ENCODE measurements at regions of chr1 and their contacts with region 1.

Region 1: DNA sequence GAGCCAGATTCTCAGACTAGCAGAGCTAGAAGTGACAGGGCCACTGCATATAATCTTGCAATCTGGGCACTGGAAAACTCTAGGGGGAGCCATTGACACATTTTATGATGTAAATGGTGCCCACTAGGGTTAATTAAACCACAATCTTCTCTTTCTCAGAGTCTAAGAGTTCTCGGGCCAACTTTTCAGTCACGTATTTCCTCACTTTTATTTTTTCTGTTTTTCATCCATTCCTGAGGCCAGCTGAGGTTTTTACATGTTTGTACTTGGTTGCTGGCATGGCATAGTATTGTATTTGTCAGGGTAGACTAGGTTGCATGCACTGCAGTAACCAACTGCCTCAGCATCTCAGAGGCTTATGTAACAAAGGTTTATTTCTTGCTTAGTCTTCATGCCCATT is 138.2 kb downstream of the ZNF326 start:
- DNase-seq: peak in 1 of 2 experiments; percentile 36
- H3K4me3 ChIP-seq: no peak overlapping the region
- H3K4me3 Mint-ChIP-seq: no peak overlapping the region
- H3K27ac Mint-ChIP-seq: no peak overlapping the region
- H3K4me1 ChIP-seq: no peaks in the 10 kb centered on the region
- H3K4me1 Mint-ChIP-seq: no peaks in the 10 kb centered on the region
- H3K27me3 ChIP-seq: no peaks in the 10 kb centered on the region
- H3K27me3 Mint-ChIP-seq: peaks cover 2% of the 10 kb centered on the region
- CTCF ChIP-seq: peak; percentile 30 to 35

Region 2: GRCh38 chr1:90291431-90292216 is 158.5 kb after region 1 on chr1:
- CTCF ChIA-PET with region 1: no interaction called
- POLR2A ChIA-PET with region 1: no interaction called
- intact Hi-C with region 1: loop called (anchors 1 kb)
- DNase-seq: no peak
- H3K4me3 ChIP-seq: no peak overlapping the region
- H3K4me3 Mint-ChIP-seq: no peak overlapping the region
- H3K27ac Mint-ChIP-seq: no peak overlapping the region
- H3K4me1 ChIP-seq: no peaks in the 10 kb centered on the region
- H3K4me1 Mint-ChIP-seq: no peaks in the 10 kb centered on the region
- H3K27me3 ChIP-seq: no peaks in the 10 kb centered on the region
- H3K27me3 Mint-ChIP-seq: peaks cover 13% of the 10 kb centered on the region
- CTCF ChIP-seq: no peak

Region 3: DNA sequence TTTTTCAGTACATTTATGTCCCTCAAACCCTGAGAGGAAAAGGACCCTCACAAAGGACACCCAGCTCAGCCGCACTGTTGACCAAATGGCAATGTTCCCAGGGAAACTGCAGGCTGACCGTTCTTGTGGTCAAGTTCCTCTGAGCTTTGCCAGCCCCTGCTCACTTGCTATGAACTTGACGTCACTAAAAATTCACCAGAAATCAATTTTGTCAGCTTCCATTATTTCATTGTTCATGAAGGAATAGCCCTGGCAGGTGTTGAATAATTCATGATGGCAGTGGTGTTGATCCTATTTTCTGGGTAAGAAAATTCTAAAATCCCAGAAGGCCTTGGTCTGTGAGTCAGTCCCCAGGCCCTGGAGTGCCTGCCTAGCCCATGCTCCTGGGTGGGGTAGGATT is 180.6 kb after region 1 on chr1:
- CTCF ChIA-PET with region 1: no interaction called
- POLR2A ChIA-PET with region 1: no interaction called
- intact Hi-C with region 1: no loop called
- DNase-seq: no peak
- H3K4me3 ChIP-seq: no peak overlapping the region
- H3K4me3 Mint-ChIP-seq: no peak overlapping the region
- H3K27ac Mint-ChIP-seq: no peak overlapping the region
- H3K4me1 ChIP-seq: no peaks in the 10 kb centered on the region
- H3K4me1 Mint-ChIP-seq: no peaks in the 10 kb centered on the region
- H3K27me3 ChIP-seq: no peaks in the 10 kb centered on the region
- H3K27me3 Mint-ChIP-seq: no peaks in the 10 kb centered on the region
- CTCF ChIP-seq: no peak

Measured in Caco-2 (cell line).